Activated T-helper 1 cell treated with anti-CD3 and anti-CD28 coated beads, Interleukin-12 subunit alpha, Interleukin-12 subunit beta, Interleukin-2, Interleukin-4 antibody, amounts not matched to agents 30 ng/mL and 10 ng/mL and 1 ng/mL, durations not matched to agents 14 hours and 24 hours and 36 hours (primary cell): ENCODE measurements at regions of chr6 and their contacts with region 1.

Region 1: GRCh38 chr6:90296346-90297114 is at the start of gene BACH2:
- DNase-seq: peak; percentile 88
- H3K4me3 Mint-ChIP-seq: peak within 1 kb of the TSS; percentile 93
- H3K27ac Mint-ChIP-seq: peak within 1 kb of the TSS; percentile 95
- H3K4me1 Mint-ChIP-seq: peaks cover 39% of the 10 kb centered on the region
- H3K27me3 Mint-ChIP-seq: peaks cover 21% of the 10 kb centered on the region
- total RNA-seq, gene BACH2: 68.1 and 71.2 TPM in 2 replicates

Region 2: GRCh38 chr6:89794324-89794723 is 502.2 kb before region 1 on chr6:
- intact Hi-C with region 1: loop called (anchors 1 kb)
- DNase-seq: no peak
- H3K4me3 Mint-ChIP-seq: peak overlapping the region; percentile 62
- H3K27ac Mint-ChIP-seq: peak overlapping the region; percentile 72
- H3K4me1 Mint-ChIP-seq: peaks cover 29% of the 10 kb centered on the region
- H3K27me3 Mint-ChIP-seq: no peaks in the 10 kb centered on the region

Region 3: GRCh38 chr6:90219209-90219985 is 77.1 kb before region 1 on chr6:
- intact Hi-C with region 1: loop called (anchors 1 kb)
- DNase-seq: no peak
- H3K4me3 Mint-ChIP-seq: no peak overlapping the region
- H3K27ac Mint-ChIP-seq: no peak overlapping the region
- H3K4me1 Mint-ChIP-seq: no peaks in the 10 kb centered on the region
- H3K27me3 Mint-ChIP-seq: no peaks in the 10 kb centered on the region

Region 4: GRCh38 chr6:90319044-90319443 is 22.5 kb after region 1 on chr6:
- intact Hi-C with region 1: loop called (anchors 1 kb)
- DNase-seq: no peak
- H3K4me3 Mint-ChIP-seq: no peak overlapping the region
- H3K27ac Mint-ChIP-seq: peak overlapping the region; percentile 63
- H3K4me1 Mint-ChIP-seq: peaks cover 19% of the 10 kb centered on the region
- H3K27me3 Mint-ChIP-seq: peaks cover 4% of the 10 kb centered on the region

Region 5: GRCh38 chr6:90445533-90446108 is 149.1 kb after region 1 on chr6:
- intact Hi-C with region 1: loop called (anchors 1 kb)
- DNase-seq: no peak
- H3K4me3 Mint-ChIP-seq: no peak overlapping the region
- H3K27ac Mint-ChIP-seq: peak overlapping the region; percentile 88
- H3K4me1 Mint-ChIP-seq: peaks cover 66% of the 10 kb centered on the region
- H3K27me3 Mint-ChIP-seq: no peaks in the 10 kb centered on the region

Region 6: DNA sequence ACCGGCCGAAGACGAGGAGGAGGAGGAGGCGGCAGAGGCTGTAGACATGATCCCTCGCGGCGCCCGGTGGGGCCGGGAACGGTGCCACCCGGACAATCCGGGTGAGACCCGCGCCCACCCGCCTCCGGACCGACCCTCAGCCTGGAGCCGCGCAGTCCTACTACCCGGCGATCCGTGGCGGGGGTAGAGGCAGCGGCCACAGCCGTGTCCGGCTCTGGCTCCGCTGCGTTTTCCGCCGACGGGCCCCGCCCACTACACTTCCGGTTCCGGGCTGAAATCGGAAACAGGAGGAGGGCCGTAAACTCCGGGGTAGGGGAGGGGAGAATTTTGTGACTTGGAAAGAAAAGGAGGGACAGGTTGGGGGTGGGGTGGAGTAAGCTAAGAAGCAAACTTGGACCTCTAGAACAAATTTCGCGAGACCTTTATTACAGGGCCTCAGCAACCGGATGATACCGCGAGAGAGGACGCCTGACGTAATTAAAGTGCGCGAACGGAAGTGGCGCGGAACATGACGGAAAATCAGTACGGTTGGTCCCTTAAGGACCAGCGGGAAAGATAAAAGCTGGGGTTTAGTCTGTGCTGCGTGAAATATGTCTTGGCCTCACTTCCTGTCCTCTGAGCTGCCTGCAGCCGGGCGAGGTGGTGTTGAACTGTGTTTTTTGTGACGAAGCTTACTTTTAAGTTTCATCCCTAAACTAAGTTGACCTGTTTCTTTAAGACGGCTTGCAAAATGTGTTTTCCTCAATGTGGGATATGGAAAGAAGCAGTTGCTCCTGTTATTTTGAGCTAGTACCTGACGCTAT is 290.5 kb after region 1 on chr6 and contains the start of gene MAP3K7:
- intact Hi-C with region 1: loop called (anchors 5 kb)
- DNase-seq: peak; percentile 92
- H3K4me3 Mint-ChIP-seq: peak within 1 kb of the TSS; percentile 93
- H3K27ac Mint-ChIP-seq: peak within 1 kb of the TSS; percentile 96
- H3K4me1 Mint-ChIP-seq: peaks cover 39% of the 10 kb centered on the region
- H3K27me3 Mint-ChIP-seq: peaks cover 8% of the 10 kb centered on the region
- total RNA-seq, gene MAP3K7: 31.0 and 35.9 TPM in 2 replicates